BJ (cell line): ENCODE measurements at regions of chr11 and their contacts with region 1.

Region 1: DNA sequence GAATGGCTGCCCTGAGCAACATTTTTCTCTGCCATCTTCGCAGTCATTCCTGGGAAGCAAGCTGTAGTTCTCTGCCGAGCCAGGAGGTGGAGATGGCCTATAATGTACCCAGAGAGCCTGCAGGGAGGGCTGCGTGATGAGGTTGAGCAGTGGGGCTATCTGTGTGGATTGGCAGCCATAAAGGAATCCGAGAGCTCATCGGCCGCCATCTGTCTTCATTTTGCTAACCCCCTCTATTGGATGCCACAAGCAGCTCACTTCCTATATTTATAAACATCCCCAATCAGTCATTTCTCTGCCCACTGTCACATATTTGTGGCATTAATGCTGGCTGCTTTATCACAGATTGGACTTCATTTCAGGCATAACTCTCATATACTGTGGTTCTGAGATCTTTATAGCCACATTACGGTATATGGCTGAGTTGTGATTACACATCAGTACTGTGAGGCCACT is 209.5 kb downstream of the NTM start:
- DNase-seq: no peak
- H3K4me3 ChIP-seq: no peak overlapping the region
- H3K27me3 ChIP-seq: 0 out of 2 replicates have a peak, but pooled peaks cover 1% of the 10 kb centered on the region
- CTCF ChIP-seq: peak; percentile 56

Region 2: DNA sequence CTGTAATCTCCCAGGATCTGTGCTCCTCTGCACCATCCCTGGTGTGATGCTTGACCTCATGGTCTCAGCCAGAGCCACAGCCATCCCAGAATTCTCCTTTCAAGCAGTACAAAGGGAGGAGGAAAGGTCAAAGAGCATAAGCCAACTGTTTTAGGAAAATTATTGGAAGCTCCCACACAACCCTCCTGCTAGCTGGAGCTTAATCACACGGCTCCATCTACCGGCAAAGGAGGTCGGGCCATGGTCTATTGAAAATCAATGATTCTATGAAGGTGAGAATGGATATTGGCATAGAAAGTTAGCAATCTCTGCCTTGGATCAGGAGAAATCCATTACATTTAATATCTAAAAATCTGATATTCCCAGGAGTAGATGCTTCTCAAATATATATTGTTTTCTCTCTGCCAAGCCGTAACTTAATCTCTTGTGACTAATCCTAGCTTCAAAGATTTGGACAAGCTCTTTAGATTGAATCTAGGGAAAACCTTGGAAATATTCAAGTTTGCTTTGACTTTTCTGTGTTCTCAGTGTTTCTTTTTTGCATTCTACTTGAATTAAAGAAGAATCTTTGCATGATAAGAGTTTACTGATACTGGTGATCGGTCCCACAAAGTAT is 50.1 kb after region 1 on chr11:
- CTCF ChIA-PET with region 1: interaction called, 11 read pairs
- POLR2A ChIA-PET with region 1: no interaction called
- DNase-seq: no peak
- H3K4me3 ChIP-seq: no peak overlapping the region
- H3K27me3 ChIP-seq: no peaks in the 10 kb centered on the region; the same call in 1 of the 2 replicates
- CTCF ChIP-seq: 0 out of 2 replicates have a peak, but pooled peaks have one; percentile 2

Region 3: DNA sequence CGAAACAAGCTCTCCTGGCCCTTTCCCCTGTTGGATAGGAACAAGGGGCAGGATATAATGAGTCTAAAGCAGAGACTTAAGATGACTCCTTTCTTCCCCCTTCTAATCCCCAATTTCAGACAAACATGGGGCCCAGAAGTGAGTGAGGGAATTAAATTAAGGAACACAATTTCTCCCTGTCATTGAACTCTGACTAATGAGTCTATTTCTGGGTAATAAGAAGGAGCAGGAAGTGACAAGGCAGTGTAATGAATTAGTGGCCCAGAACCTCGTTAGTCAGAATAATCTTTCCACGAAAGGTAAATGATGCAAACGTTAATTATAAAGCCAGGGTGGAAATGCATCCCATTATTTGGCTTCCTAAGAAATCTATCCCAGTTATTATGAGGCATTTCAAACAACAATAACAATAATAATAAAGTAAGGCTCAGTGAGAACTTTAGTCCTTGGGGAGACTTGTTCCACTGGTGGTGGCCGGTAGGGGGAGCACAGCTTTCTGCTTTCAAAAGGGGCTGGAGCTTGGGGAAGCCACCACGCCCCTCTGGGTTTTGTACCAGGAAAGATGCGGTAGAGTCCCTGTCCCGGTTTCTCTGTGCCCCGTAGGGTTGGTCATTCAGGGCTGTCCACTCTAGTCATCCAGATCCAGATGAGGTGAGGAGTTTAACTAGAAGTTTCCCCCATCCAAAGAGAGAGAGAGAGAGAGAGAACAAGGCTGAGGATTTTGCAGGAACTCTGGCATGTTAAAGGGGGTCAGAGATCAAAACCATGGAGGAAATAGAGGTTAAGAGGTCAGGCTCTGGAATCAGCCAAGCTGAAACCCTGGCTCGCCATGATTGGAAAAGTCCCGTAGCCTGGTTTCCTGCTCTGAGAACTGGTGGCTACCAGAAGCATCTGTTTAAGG is 88.8 kb after region 1 on chr11:
- CTCF ChIA-PET with region 1: interaction called, 35 read pairs
- POLR2A ChIA-PET with region 1: no interaction called
- DNase-seq: no peak
- H3K4me3 ChIP-seq: no peak overlapping the region
- H3K27me3 ChIP-seq: no peaks in the 10 kb centered on the region
- CTCF ChIP-seq: peak; percentile 68

Region 4: DNA sequence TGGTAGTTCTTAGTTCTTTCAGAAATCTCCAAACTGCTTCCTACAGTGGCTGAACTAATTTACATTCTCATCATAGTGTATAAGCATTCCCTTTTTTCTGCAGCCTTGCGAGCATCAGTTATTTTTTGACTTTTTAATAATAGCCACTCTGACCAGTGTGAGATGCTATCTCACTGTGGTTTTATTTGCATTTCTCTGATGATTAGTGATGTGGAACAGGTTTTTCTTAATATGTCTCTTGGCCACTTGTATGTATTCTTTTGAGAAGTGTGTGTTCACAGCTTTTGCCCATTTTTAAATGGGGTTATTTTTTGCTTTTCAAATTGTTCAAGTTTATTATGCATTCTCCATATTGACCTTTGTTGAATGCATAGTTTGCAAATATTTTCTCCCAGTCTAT is 249.8 kb after region 1 on chr11:
- CTCF ChIA-PET with region 1: no interaction called
- POLR2A ChIA-PET with region 1: no interaction called
- DNase-seq: no peak
- H3K4me3 ChIP-seq: no peak overlapping the region
- H3K27me3 ChIP-seq: peaks cover 5% of the 10 kb centered on the region
- CTCF ChIP-seq: no peak